ENCODE measurements at regions of chr2 and their contacts with region 1.

Region 1: DNA sequence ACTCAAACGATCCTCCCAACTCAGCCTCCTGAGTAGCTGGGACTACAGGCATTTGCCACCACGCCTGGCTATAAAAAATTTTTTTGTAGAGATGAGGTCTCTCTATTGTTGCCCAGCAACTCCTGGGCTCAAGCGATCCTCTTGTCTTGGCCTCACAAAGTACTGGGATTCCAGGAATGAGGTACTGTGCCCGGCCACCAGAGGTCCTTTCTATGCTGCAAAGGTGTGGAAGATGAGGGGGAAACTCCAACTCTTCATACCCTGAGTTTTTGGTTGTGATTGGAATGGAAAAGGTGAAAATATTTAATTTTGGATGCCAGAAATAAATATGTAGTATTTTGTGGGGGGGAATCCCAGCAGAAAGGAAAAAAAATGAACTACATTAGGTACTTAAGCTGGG is 36.0 kb downstream of the MRPL33 start:
- DNase-seq: no peak
- H3K4me3 ChIP-seq: no peak overlapping the region
- CTCF ChIP-seq: peak; percentile 49

Region 2: DNA sequence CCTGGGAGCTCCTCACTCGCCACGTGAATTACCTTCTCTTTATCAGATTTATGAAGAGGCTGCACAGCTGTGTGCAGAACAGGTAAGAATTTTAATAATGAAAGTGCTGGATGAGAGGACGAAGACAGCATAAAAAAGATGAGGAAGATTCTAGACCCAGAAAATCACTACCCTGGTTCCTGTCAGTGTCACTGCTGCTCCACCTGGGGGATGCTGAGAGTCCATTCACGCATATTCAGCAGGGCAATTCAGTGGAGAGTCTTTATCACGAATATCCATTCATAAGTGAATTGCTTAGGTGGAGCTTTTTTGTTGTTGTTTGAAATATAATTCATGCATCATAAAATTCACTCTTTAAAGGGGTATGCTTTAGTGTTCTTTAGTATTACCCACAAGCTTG is 16.1 kb after region 1 on chr2:
- CTCF ChIA-PET with region 1: interaction called, 10 read pairs
- POLR2A ChIA-PET with region 1: no interaction called
- DNase-seq: no peak
- H3K4me3 ChIP-seq: no peak overlapping the region
- CTCF ChIP-seq: no peak

Region 3: DNA sequence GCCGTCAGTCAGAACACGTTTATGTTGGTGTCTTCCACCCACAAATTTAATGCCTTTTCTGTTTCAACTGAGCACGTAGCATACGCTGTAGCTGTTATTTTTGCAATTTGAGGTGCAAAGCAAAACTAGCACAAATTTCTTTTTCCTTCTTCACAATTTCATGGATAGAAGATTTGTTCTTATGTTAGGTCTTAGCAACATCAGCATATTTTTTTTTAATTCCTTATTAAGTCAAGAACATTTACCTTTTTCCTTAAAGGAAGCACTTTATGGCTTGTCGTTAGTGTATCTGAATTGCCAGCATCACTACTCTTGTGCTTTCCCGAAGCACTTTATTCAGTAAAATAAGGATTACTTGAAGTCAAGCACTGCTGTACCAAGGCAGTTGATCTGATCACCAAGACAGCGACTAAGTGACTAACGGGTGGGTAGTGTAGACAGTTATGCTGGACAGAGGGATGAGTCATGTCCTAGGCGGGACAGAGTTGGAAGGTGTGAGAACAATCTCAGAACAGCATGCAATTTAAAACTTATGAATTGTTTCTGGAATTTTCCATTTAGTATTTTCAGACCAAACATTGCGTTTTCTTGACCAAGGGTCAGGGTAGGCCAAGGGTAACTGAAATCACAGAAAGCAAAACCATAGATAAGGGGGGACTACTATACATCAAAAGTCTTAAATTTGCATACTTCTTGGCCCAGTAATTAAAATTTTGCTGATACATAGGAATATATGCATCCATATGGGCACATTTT is 96.4 kb after region 1 on chr2:
- CTCF ChIA-PET with region 1: no interaction called
- POLR2A ChIA-PET with region 1: no interaction called
- DNase-seq: no peak
- H3K4me3 ChIP-seq: no peak overlapping the region
- CTCF ChIP-seq: no peak

Measured in AG04449 (cell line).